Testis (tissue), 5 donors: ENCODE measurements at regions of chr6 and their contacts with region 1.

Region 1: GRCh38 chr6:165015676-165016075 is 293.7 kb downstream of the C6orf118 start:
- DNase-seq: no peak
- H3K4me3 ChIP-seq: no peak overlapping the region
- H3K27ac ChIP-seq: no peak overlapping the region
- H3K4me1 ChIP-seq: no peaks in the 10 kb centered on the region
- H3K27me3 ChIP-seq: no peaks in the 10 kb centered on the region
- CTCF ChIP-seq: no peak
- POLR2A ChIP-seq: no peak

Region 2: GRCh38 chr6:164014346-164015087 is 1001.2 kb before region 1 on chr6:
- intact Hi-C with region 1: loop called (anchors 5 kb)
- DNase-seq: no peak
- H3K4me3 ChIP-seq: no peak overlapping the region
- H3K27ac ChIP-seq: no peak overlapping the region
- H3K4me1 ChIP-seq: no peaks in the 10 kb centered on the region
- H3K27me3 ChIP-seq: no peaks in the 10 kb centered on the region
- CTCF ChIP-seq: no peak
- POLR2A ChIP-seq: no peak

Region 3: GRCh38 chr6:164942271-164942765 is 73.4 kb before region 1 on chr6:
- intact Hi-C with region 1: no loop called
- DNase-seq: no peak
- H3K4me3 ChIP-seq: no peak overlapping the region
- H3K27ac ChIP-seq: no peak overlapping the region
- H3K4me1 ChIP-seq: no peaks in the 10 kb centered on the region
- H3K27me3 ChIP-seq: no peaks in the 10 kb centered on the region
- CTCF ChIP-seq: no peak
- POLR2A ChIP-seq: no peak